H1 (cell line): ENCODE measurements at regions of chr1 and their contacts with region 1.

Region 1: GRCh38 chr1:156641761-156642264 is at the start of gene BCAN:
- DNase-seq: peak in 1 of 2 experiments; percentile 80
- H3K4me3 ChIP-seq: peak within 1 kb of the TSS; percentile 26 to 72 (median 53)
- H3K27ac ChIP-seq: no peak within 1 kb of the TSS
- H3K4me1 ChIP-seq: peaks cover 5 to 22% (median 15%) of the 10 kb centered on the region in 4 experiments
- H3K27me3 ChIP-seq: peaks cover 11 to 83% (median 63%) of the 10 kb centered on the region in 4 experiments
- CTCF ChIP-seq: no peak
- EP300 ChIP-seq: no peak
- POLR2A ChIP-seq: no peak
- RAD21 ChIP-seq: no peak
- total RNA-seq, gene BCAN: 3.8 and 4.5 TPM in 2 replicates

Region 2: DNA sequence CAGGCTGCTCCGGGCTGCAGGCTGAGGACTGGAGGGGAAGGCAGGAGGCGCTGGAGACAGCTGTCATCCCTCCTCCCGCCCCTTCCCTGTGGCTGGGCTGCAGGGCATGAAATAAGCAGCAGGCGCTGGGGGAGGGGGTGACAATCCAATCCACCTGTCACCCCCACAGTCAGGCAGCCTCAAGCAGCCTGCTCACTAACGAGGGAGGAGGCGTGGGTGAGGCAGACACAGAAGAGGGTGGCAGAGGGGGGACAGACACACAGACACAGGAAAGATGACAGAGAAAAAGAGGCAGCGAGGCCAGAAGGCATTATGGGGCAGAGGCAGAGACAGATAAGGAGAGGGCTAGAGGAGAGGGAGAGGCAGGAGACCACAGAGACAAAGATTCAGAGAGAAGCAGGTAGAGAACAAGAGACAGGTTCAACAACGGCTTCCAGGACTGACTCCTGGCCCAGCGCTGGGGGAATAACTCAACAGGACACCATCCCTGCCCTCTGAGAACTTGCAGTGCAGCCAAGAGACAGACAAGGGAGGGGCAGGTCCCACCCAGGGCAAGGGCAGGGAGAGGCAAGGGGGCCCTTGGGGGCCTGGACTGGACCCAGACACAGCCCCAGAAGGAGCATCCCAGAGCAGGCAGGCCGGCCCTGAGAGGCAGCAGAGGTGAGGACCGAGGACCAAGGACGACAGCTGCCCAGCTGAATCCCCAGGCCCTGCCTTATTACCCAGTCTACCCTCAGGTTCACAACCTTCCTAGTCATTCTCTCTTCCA is 152.5 kb before region 1 on chr1:
- CTCF ChIA-PET with region 1: no interaction called
- POLR2A ChIA-PET with region 1: no interaction called
- DNase-seq: no peak
- H3K4me3 ChIP-seq: peak overlapping the region in 1 of 4 experiments; percentile 51; a peak in 2 of 8 replicates
- H3K27ac ChIP-seq: no peak overlapping the region
- H3K4me1 ChIP-seq: peaks cover 9 to 44% (median 28%) of the 10 kb centered on the region in 4 experiments
- H3K27me3 ChIP-seq: no peaks in the 10 kb centered on the region
- CTCF ChIP-seq: peak in 2 of 3 experiments; percentile 26 to 32; a peak in 2 of 4 replicates
- EP300 ChIP-seq: no peak
- POLR2A ChIP-seq: no peak
- RAD21 ChIP-seq: peak; percentile 18 to 31; a peak in 1 of 4 replicates

Region 3: DNA sequence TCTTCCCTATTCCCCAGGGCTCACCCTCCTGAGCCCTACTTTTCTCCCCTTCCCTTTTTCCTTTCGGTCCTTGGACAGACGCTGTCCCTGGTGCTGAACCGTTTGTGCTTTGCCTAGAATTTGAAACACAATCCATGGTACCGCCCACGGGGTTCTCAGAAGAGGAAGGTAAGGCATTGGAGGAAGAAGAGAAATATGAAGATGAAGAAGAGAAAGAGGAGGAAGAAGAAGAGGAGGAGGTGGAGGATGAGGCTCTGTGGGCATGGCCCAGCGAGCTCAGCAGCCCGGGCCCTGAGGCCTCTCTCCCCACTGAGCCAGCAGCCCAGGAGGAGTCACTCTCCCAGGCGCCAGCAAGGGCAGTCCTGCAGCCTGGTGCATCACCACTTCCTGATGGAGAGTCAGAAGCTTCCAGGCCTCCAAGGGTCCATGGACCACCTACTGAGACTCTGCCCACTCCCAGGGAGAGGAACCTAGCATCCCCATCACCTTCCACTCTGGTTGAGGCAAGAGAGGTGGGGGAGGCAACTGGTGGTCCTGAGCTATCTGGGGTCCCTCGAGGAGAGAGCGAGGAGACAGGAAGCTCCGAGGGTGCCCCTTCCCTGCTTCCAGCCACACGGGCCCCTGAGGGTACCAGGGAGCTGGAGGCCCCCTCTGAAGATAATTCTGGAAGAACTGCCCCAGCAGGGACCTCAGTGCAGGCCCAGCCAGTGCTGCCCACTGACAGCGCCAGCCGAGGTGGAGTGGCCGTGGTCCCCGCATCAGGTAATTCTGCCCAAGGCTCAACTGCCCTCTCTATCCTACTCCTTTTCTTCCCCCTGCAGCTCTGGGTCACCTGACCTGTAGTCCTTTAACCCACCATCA is 10.5 kb after region 1 on chr1:
- CTCF ChIA-PET with region 1: interaction called, 789 read pairs
- POLR2A ChIA-PET with region 1: interaction called, 13 read pairs
- DNase-seq: peak in 1 of 2 experiments; percentile 92
- H3K4me3 ChIP-seq: no peak overlapping the region
- H3K27ac ChIP-seq: no peak overlapping the region
- H3K4me1 ChIP-seq: peaks cover 2 to 9% (median 4%) of the 10 kb centered on the region in 4 experiments; a peak in 6 of 7 replicates
- H3K27me3 ChIP-seq: peaks cover 2 to 32% (median 26%) of the 10 kb centered on the region in 4 experiments
- CTCF ChIP-seq: no peak
- EP300 ChIP-seq: no peak
- POLR2A ChIP-seq: no peak
- RAD21 ChIP-seq: no peak

Region 4: GRCh38 chr1:156659994-156660751 is 18.4 kb after region 1 on chr1:
- CTCF ChIA-PET with region 1: interaction called, 254 read pairs
- POLR2A ChIA-PET with region 1: interaction called, 6 read pairs
- DNase-seq: peak; percentile 96 to 100
- H3K4me3 ChIP-seq: no peak overlapping the region
- H3K27ac ChIP-seq: peak overlapping the region; percentile 54; the same call in 1 of the 2 replicates
- H3K4me1 ChIP-seq: peaks cover 19 to 49% (median 43%) of the 10 kb centered on the region in 4 experiments
- H3K27me3 ChIP-seq: peaks cover 2 to 44% (median 33%) of the 10 kb centered on the region in 4 experiments
- CTCF ChIP-seq: peak in 2 of 3 experiments; percentile 97 to 99; a peak in 3 of 4 replicates
- EP300 ChIP-seq: peak in 1 of 2 experiments; percentile 71; a peak in 1 of 3 replicates
- POLR2A ChIP-seq: peak in 1 of 2 experiments; percentile 30; a peak in 1 of 3 replicates
- RAD21 ChIP-seq: peak; percentile 87 to 96